Gastrocnemius medialis (tissue), 4 donors: ENCODE measurements at regions of chr16 and their contacts with region 1.

Region 1: GRCh38 chr16:85420501-85421337 is 192.4 kb upstream of the GSE1 start:
- DNase-seq: no peak
- ATAC-seq: peak; percentile 51 to 70
- H3K4me3 ChIP-seq: no peak overlapping the region
- H3K27ac ChIP-seq: no peak overlapping the region
- H3K4me1 ChIP-seq: peaks cover 7 to 10% of the 10 kb centered on the region in 2 donors
- H3K27me3 ChIP-seq: no peaks in the 10 kb centered on the region
- CTCF ChIP-seq: peak; percentile 93 to 100 (median 99)
- POLR2A ChIP-seq: no peak

Region 2: DNA sequence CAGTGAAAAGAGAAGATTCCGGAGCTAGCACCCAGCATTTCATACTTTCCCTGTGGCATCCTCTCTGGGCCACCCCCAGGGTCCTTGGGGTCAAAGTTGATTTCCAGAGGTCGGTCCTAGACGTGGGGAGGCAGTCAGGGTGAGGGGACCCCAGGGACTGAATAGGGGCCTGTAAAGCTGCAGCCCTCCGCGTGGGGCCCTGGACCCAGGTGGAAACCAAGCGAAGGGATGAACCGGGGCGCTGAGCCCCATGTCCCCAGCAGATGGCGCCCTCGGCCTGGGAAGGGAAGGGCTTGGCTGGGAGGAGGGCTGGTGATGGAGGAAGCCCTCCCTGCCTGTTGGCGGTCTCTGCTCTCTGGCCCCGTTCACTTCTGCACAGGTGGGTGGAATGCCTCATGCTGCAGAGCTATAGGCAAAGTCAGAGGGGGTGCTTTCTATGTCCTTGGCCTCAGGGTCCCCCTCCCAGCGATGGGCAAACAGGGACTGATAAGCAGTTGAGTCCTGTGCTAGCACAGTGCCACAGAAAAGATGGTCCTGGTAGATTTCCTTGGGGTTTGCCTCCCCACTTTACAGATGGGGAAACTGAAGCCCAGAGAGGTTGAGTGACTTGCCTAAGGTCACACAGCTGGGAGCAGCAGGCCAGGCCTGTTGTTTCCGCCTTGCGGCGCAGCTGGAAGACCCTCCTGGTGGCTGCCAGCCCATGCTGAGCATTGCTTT is 145.0 kb before region 1 on chr16:
- in situ Hi-C with region 1: no loop called
- intact Hi-C with region 1: loop called (anchors 5 kb)
- DNase-seq: peak; percentile 50 to 57
- ATAC-seq: peak; percentile 51 to 68
- H3K4me3 ChIP-seq: no peak overlapping the region
- H3K27ac ChIP-seq: no peak overlapping the region
- H3K4me1 ChIP-seq: peaks cover 9 to 10% of the 10 kb centered on the region in 2 donors
- H3K27me3 ChIP-seq: no peaks in the 10 kb centered on the region
- CTCF ChIP-seq: peak; percentile 85 to 95 (median 91)
- POLR2A ChIP-seq: no peak

Region 3: GRCh38 chr16:85473909-85474620 is 53.3 kb after region 1 on chr16:
- in situ Hi-C with region 1: no loop called
- intact Hi-C with region 1: loop called (anchors 2 kb)
- DNase-seq: peak in 1 of 2 donors; percentile 65
- ATAC-seq: peak; percentile 85 to 93
- H3K4me3 ChIP-seq: no peak overlapping the region
- H3K27ac ChIP-seq: peak overlapping the region; percentile 33 to 59 (median 56)
- H3K4me1 ChIP-seq: peaks cover 9 to 21% of the 10 kb centered on the region in 2 donors
- H3K27me3 ChIP-seq: no peaks in the 10 kb centered on the region
- CTCF ChIP-seq: peak in 3 of 5 experiments; percentile 29 to 44 (median 42)
- POLR2A ChIP-seq: no peak

Region 4: DNA sequence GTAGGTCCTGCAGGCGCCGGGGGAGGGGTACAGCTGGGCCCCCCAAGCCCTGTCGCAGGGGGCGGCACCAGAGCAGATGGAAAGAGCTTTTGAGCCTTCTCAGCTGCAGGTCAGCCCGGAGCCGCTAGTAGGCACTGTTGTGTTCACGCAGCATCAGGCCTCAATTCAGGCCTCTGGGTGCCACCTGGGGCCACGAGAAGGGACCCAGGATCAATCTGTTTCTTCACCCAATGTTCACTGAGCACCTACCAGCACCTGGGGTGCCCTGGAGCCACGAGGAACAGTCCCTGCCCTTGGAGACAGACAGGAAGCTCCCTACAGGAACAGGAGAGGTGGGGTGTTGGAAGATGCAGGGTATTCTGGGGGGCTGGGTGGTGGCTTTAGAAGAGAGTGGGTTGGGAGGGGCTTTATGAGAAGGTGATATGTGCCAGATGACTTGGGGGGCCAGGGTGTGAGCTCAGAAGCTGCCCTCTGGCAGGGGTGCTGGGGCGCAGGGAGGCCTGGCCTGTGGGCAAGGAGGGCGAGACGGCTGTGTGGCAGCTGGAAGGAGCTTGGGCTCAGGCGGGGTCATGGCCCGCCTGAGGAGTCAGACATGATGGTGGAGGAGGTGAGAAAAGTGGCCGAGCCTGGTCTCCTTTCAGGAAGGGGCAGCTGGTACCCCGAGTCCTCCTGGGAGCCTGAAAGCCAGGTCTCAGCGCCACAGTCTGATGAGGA is 70.5 kb after region 1 on chr16:
- in situ Hi-C with region 1: no loop called
- intact Hi-C with region 1: loop called (anchors 5 kb)
- DNase-seq: no peak
- ATAC-seq: peak in 1 of 2 donors; percentile 23
- H3K4me3 ChIP-seq: no peak overlapping the region
- H3K27ac ChIP-seq: peak overlapping the region; percentile 72 to 76 (median 75)
- H3K4me1 ChIP-seq: peaks cover 17 to 20% of the 10 kb centered on the region in 2 donors
- H3K27me3 ChIP-seq: no peaks in the 10 kb centered on the region
- CTCF ChIP-seq: no peak
- POLR2A ChIP-seq: no peak

Region 5: GRCh38 chr16:85554112-85554813 is 133.5 kb after region 1 on chr16:
- in situ Hi-C with region 1: no loop called
- intact Hi-C with region 1: loop called (anchors 2 kb)
- DNase-seq: peak; percentile 55 to 66
- ATAC-seq: peak; percentile 26 to 32
- H3K4me3 ChIP-seq: peak overlapping the region; percentile 88 to 98 (median 94)
- H3K27ac ChIP-seq: peak overlapping the region; percentile 95 to 96 (median 96)
- H3K4me1 ChIP-seq: peaks cover 34 to 37% of the 10 kb centered on the region in 2 donors
- H3K27me3 ChIP-seq: no peaks in the 10 kb centered on the region
- CTCF ChIP-seq: no peak
- POLR2A ChIP-seq: no peak

Region 6: DNA sequence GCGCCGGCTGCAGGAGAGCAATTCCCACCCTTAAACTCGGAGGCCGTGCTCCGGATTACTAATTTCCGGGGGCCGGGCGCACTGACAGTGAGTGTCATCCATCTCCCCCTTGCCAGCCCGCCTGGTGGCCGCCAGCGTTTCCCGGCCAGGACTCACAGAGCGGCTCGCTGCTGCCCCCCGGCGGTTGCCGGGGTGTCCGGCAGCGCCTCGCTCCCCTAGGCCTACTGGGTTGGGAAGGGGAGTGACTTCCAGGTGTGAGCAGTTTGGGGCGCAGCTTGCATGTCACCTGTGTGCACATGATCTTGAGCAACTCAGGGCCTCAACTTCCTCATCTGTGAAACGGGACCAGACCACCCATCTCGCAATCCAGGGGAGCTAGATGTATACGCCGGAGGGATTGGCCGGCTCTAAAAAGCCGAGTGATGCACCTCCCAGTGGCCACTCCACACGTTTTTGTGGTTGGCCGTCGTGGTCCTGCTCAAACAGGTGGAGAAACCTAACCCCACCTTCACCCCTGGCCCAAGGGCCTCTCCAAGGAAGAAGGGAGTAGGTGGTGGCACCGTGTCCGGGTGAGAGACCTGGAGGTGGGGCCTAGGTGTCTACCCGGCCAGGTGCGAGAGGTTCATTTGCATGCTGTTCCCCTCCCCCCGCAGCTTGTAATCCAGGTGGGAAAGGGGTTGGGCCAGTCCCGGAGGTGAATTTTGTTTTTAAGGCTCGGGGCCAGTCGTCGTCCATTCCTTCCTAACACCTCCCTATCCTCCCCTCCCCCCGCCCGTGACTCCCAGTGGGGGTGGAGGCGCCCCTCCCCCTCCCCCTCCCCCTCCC is 190.0 kb after region 1 on chr16:
- in situ Hi-C with region 1: loop called (anchors 5 to 10 kb)
- intact Hi-C with region 1: loop called (anchors 1 kb)
- DNase-seq: peak; percentile 74 to 83
- ATAC-seq: peak; percentile 24 to 31
- H3K4me3 ChIP-seq: peak overlapping the region; percentile 66 to 96 (median 81)
- H3K27ac ChIP-seq: peak overlapping the region; percentile 91 to 99 (median 95)
- H3K4me1 ChIP-seq: peaks cover 34 to 35% of the 10 kb centered on the region in 2 donors
- H3K27me3 ChIP-seq: no peaks in the 10 kb centered on the region
- CTCF ChIP-seq: peak; percentile 99 to 100 (median 99)
- POLR2A ChIP-seq: no peak

Region 7: DNA sequence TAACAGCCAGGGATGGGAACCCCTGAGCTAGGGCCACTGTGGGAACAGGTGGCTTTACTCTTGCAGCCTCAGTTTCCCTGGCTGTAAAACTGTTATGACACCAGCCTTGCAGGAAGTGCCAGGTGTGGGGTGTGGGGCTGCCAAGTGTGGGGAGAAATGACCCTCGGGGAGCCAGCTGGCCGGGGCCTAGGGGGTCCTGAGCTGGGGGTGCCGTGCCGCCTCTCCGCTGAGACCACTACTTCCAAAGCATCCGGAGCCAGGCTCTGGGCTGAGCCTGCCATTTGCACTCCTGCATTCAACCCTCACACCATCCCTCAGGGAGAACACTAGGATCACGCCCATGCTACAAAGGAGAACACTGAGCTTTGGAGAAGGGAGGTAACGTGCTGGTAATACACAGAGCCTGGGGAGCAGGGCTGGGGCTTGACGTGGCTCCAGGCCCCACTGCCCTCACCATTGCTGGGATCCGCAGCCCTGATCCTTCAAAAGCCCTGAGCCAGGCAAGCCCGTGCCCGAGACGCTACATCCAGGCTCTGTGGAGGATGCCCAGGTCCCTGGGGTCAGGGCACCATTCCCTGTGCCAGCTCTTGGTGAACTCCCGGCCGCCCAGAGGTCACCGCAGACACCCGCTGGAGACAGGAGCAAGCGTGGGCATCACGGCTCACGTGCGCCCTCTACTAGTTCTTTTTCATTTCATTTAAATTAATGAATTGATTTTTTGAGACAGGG is 296.8 kb after region 1 on chr16:
- in situ Hi-C with region 1: loop called in 1 of 4 experiments (anchors 25 kb)
- intact Hi-C with region 1: loop called (anchors 10 kb)
- DNase-seq: peak; percentile 34 to 54
- ATAC-seq: peak in 1 of 2 donors; percentile 38
- H3K4me3 ChIP-seq: no peak overlapping the region
- H3K27ac ChIP-seq: no peak overlapping the region
- H3K4me1 ChIP-seq: peaks cover 26 to 29% of the 10 kb centered on the region in 2 donors
- H3K27me3 ChIP-seq: no peaks in the 10 kb centered on the region
- CTCF ChIP-seq: peak; percentile 69 to 84 (median 82)
- POLR2A ChIP-seq: no peak